HepG2 (cell line): ENCODE measurements at regions of chr20 and their contacts with region 1.

Region 1: GRCh38 chr20:30286162-30286561 is 971.3 kb upstream of the DEFB115 start:
- DNase-seq: peak; percentile 37
- ATAC-seq: peak; percentile 94
- H3K4me3 ChIP-seq: no peak overlapping the region
- H3K27ac ChIP-seq: no peak overlapping the region
- H3K4me1 ChIP-seq: no peaks in the 10 kb centered on the region
- H3K27me3 ChIP-seq: no peaks in the 10 kb centered on the region
- CTCF ChIP-seq: peak; percentile 68
- EP300 ChIP-seq: no peak
- POLR2A ChIP-seq: no peak
- RAD21 ChIP-seq: peak; percentile 61

Region 2: DNA sequence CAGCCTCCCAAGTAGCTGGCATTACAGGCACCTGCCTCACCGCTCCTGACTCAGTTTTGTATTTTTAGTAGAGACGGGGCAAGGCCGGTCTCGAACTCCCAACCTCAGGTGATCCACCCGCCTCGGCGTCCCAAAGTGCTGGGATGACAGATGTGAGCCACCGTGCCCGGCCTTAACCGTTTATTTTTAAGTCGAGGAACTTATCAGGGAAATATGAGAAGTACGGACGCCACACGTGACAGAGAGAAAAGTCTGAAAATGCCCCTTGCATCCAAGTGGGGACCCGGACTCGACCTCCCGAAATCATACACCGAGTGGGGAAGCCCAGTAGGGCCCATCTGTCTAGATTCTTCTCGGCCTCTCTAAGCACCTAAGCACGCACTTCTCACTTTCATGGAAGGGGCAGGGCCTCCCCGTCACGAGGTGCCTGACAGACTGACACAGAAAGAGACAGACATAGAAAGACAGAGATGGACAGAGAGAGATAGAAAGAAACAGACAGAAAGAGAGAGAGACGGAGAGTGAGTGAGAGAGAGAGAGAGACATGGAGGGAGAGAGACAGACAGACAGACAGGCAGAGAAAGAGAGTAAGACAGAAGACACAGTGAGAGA is 214.8 kb after region 1 on chr20:
- CTCF ChIA-PET with region 1: no interaction called
- POLR2A ChIA-PET with region 1: no interaction called
- in situ Hi-C with region 1: no loop called
- intact Hi-C with region 1: loop called (anchors 5 kb)
- DNase-seq: no peak
- ATAC-seq: 0 out of 3 replicates have a peak, but pooled peaks have one; percentile 18
- H3K4me3 ChIP-seq: no peak overlapping the region
- H3K27ac ChIP-seq: no peak overlapping the region
- H3K4me1 ChIP-seq: no peaks in the 10 kb centered on the region
- H3K27me3 ChIP-seq: no peaks in the 10 kb centered on the region; a peak in 1 of 5 replicates
- CTCF ChIP-seq: no peak
- EP300 ChIP-seq: no peak
- POLR2A ChIP-seq: no peak
- RAD21 ChIP-seq: no peak

Region 3: GRCh38 chr20:30937790-30938189 is 651.6 kb after region 1 on chr20:
- CTCF ChIA-PET with region 1: no interaction called
- POLR2A ChIA-PET with region 1: no interaction called
- in situ Hi-C with region 1: no loop called
- intact Hi-C with region 1: no loop called
- DNase-seq: no peak
- ATAC-seq: no peak
- H3K4me3 ChIP-seq: no peak overlapping the region
- H3K27ac ChIP-seq: no peak overlapping the region
- H3K4me1 ChIP-seq: no peaks in the 10 kb centered on the region
- H3K27me3 ChIP-seq: no peaks in the 10 kb centered on the region
- CTCF ChIP-seq: no peak
- EP300 ChIP-seq: no peak
- POLR2A ChIP-seq: no peak
- RAD21 ChIP-seq: no peak

Region 4: GRCh38 chr20:31514159-31515071 is 1228.3 kb after region 1 on chr20 and contains the start of gene HM13:
- CTCF ChIA-PET with region 1: no interaction called
- POLR2A ChIA-PET with region 1: no interaction called
- in situ Hi-C with region 1: no loop called
- intact Hi-C with region 1: no loop called
- DNase-seq: peak; percentile 93
- ATAC-seq: peak; percentile 88
- H3K4me3 ChIP-seq: peak within 1 kb of the TSS; percentile 83 to 96 (median 92)
- H3K27ac ChIP-seq: peak within 1 kb of the TSS; percentile 75
- H3K4me1 ChIP-seq: peaks cover 39% of the 10 kb centered on the region
- H3K27me3 ChIP-seq: no peaks in the 10 kb centered on the region; a peak in 1 of 5 replicates
- CTCF ChIP-seq: peak; percentile 94
- EP300 ChIP-seq: peak in 1 of 2 experiments; percentile 59; a peak in 3 of 4 replicates
- POLR2A ChIP-seq: peak; percentile 99 to 100
- RAD21 ChIP-seq: peak; percentile 75
- total RNA-seq, gene HM13: 68.4 and 118 TPM in 2 replicates